ENCODE measurements at regions of chr12 and their contacts with region 1.

Region 1: DNA sequence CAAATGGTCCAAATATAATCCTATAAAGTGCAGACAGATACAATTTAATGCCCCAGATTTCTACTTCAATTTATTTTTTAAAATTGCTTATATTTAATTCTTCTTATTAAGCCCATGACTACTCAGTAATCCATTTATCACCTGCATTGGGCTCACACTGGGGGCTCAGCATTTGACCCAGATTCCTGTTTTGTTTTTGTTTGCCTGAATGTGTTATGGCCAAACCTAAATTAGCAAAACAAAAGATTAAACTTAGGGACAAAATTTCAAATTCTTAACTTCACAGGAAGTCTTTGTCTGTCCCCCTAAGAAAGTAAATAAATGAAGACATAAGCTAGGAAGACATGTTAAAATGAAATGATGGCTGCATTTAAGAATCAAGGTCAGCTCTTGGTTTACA is 322.3 kb downstream of the RMST start:
- DNase-seq: no peak
- ATAC-seq: no peak
- H3K4me3 Mint-ChIP-seq: no peak overlapping the region
- H3K27ac Mint-ChIP-seq: no peak overlapping the region
- H3K4me1 Mint-ChIP-seq: no peaks in the 10 kb centered on the region
- H3K27me3 Mint-ChIP-seq: no peaks in the 10 kb centered on the region
- CTCF ChIP-seq: no peak

Region 2: DNA sequence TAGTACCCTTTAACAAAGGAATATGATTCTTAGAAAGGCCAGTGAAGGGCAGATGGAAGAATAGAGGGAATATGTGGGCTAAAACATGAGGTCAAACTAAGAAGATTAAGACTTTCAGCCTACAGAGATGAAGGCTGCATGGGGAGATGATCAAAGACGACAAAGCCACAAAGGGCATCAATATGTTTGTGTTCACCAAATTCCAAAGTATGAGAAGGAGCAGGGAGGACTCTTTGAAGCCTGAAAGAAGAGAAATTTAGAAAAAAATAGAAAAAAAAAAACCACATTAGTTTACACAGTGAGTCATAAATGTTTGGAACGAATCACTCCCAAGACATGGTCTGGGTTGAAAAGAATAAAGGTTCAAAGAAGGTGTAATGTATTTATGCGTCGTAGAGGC is 746.1 kb before region 1 on chr12:
- CTCF ChIA-PET with region 1: no interaction called
- POLR2A ChIA-PET with region 1: no interaction called
- intact Hi-C with region 1: no loop called
- DNase-seq: no peak
- ATAC-seq: no peak
- H3K4me3 Mint-ChIP-seq: no peak overlapping the region
- H3K27ac Mint-ChIP-seq: no peak overlapping the region
- H3K4me1 Mint-ChIP-seq: no peaks in the 10 kb centered on the region
- H3K27me3 Mint-ChIP-seq: peaks cover 4% of the 10 kb centered on the region
- CTCF ChIP-seq: no peak

Region 3: DNA sequence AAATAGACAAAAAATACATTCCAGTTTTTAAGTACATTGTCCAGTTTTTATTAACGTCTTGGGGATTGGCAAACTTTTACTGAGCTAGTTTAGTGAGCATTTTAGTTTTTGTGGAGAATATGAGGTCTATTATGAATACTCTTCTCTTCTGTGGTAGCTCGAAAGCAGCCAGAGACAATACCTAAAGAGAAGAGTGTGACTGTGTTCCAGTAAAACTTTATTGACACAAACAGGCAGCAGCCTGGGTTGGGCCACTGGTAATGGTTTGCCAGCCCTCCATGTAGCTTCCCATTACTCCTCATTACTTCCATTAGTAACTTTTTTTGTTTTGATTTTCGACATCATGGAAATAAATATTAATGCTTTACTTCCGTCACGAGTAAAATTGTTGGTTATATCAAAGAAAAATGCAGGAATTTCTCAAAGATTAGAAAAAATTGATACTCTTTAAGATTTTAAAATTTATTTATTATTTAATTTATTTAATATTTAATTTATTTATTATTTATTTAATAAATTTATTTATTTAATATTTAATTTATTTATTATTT is 302.7 kb before region 1 on chr12:
- CTCF ChIA-PET with region 1: no interaction called
- POLR2A ChIA-PET with region 1: no interaction called
- intact Hi-C with region 1: no loop called
- DNase-seq: no peak
- ATAC-seq: no peak
- H3K4me3 Mint-ChIP-seq: no peak overlapping the region
- H3K27ac Mint-ChIP-seq: no peak overlapping the region
- H3K4me1 Mint-ChIP-seq: no peaks in the 10 kb centered on the region
- H3K27me3 Mint-ChIP-seq: no peaks in the 10 kb centered on the region
- CTCF ChIP-seq: no peak

Region 4: GRCh38 chr12:97666263-97666662 is 118.6 kb before region 1 on chr12:
- CTCF ChIA-PET with region 1: no interaction called
- POLR2A ChIA-PET with region 1: no interaction called
- intact Hi-C with region 1: no loop called
- DNase-seq: no peak
- ATAC-seq: no peak
- H3K4me3 Mint-ChIP-seq: no peak overlapping the region
- H3K27ac Mint-ChIP-seq: no peak overlapping the region
- H3K4me1 Mint-ChIP-seq: no peaks in the 10 kb centered on the region
- H3K27me3 Mint-ChIP-seq: no peaks in the 10 kb centered on the region
- CTCF ChIP-seq: no peak

Region 5: DNA sequence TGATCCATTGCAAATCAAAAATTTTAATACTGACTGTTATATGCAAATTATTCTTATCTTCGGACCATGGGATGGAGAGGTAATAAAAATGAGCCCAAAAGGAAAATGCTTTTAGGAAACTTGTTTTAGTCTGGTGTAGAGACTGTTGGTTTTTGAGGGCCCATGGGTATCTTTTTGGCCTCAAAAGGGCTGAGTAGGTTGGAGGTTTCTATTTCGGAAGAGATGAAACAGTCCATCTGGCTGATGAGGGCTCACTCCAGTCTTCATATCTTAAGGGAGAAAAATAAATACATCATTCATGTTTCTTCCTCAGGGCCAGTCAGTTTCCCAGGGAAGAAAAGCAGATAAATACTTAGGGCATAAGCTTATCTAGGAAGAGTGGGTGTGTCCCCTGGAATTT is 31.6 kb before region 1 on chr12:
- CTCF ChIA-PET with region 1: no interaction called
- POLR2A ChIA-PET with region 1: no interaction called
- intact Hi-C with region 1: loop called (anchors 1 kb)
- DNase-seq: no peak
- ATAC-seq: no peak
- H3K4me3 Mint-ChIP-seq: no peak overlapping the region
- H3K27ac Mint-ChIP-seq: no peak overlapping the region
- H3K4me1 Mint-ChIP-seq: no peaks in the 10 kb centered on the region
- H3K27me3 Mint-ChIP-seq: no peaks in the 10 kb centered on the region
- CTCF ChIP-seq: no peak

Measured in activated B cell treated with CpG ODN at 0.5 μM for 24 hours (primary cell).